ENCODE measurements at regions of chr15 and their contacts with region 1.

Region 1: DNA sequence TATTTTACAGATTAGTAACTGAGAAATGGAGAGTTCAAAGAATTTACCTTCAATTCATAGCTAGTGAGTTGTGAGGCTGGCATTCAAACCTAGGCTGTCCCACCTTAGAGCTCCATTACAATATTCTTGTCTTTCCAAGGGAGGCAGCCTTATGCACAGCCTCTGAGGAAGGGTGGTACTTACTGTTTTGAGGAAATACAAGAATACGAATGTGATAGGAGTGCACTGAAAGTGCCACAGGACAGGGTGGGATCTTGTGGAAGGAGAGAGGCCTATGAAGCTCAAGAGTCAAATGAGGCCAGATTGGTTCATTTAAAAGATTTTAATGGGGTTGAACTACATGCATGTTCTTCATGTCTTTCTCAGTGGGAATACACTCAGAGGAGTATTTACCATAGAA is 86.3 kb downstream of the ARIH1 start:
- DNase-seq: no peak
- H3K4me3 ChIP-seq: no peak overlapping the region
- H3K4me3 Mint-ChIP-seq: no peak overlapping the region
- H3K27ac ChIP-seq: no peak overlapping the region
- H3K27ac Mint-ChIP-seq: peak overlapping the region in 4 of 8 donors; percentile 4 to 35 (median 20)
- H3K4me1 ChIP-seq: no peaks in the 10 kb centered on the region
- H3K4me1 Mint-ChIP-seq: peaks cover 22 to 49% (median 39%) of the 10 kb centered on the region in 3 donors
- H3K27me3 ChIP-seq: no peaks in the 10 kb centered on the region
- H3K27me3 Mint-ChIP-seq: no peaks in the 10 kb centered on the region

Region 2: DNA sequence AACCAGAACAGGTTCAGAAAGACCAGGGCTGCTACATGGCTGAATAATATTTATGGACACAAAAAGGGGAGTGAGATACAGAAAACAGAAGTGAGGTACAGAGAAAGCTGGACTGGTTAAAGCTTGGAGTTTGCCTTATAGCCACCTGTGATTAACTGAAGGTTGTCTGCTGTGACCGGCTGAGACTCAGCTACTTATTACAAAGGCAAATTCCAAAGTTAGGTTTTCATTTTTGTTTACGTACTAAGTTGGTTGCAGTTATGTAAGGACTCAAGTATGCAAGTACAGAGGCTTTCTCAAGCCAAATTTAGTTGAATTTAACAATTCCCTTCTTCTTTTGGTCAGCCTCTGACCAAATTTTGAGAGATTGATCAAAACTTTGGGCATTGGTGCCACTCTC is 1180.6 kb before region 1 on chr15:
- CTCF ChIA-PET with region 1: no interaction called
- POLR2A ChIA-PET with region 1: interaction called, 10 read pairs
- DNase-seq: no peak
- H3K4me3 ChIP-seq: no peak overlapping the region
- H3K4me3 Mint-ChIP-seq: no peak overlapping the region
- H3K27ac ChIP-seq: no peak overlapping the region
- H3K27ac Mint-ChIP-seq: no peak overlapping the region
- H3K4me1 ChIP-seq: peaks cover 8% of the 10 kb centered on the region
- H3K4me1 Mint-ChIP-seq: peaks cover 6 to 16% (median 11%) of the 10 kb centered on the region in 3 donors
- H3K27me3 ChIP-seq: no peaks in the 10 kb centered on the region
- H3K27me3 Mint-ChIP-seq: peaks cover 5 to 29% of the 10 kb centered on the region in 2 donors

Region 3: GRCh38 chr15:72532991-72533601 is 27.4 kb before region 1 on chr15:
- CTCF ChIA-PET with region 1: no interaction called
- POLR2A ChIA-PET with region 1: no interaction called
- DNase-seq: peak in 2 of 5 donors; percentile 21 to 25
- H3K4me3 ChIP-seq: no peak overlapping the region
- H3K4me3 Mint-ChIP-seq: no peak overlapping the region
- H3K27ac ChIP-seq: no peak overlapping the region
- H3K27ac Mint-ChIP-seq: peak overlapping the region in 3 of 8 donors; percentile 41 to 66 (median 57)
- H3K4me1 ChIP-seq: peaks cover 34% of the 10 kb centered on the region
- H3K4me1 Mint-ChIP-seq: peaks cover 44 to 79% (median 78%) of the 10 kb centered on the region in 3 donors
- H3K27me3 ChIP-seq: no peaks in the 10 kb centered on the region
- H3K27me3 Mint-ChIP-seq: no peaks in the 10 kb centered on the region

Measured in CD8-positive, alpha-beta memory T cell (primary cell).